ENCODE measurements at regions of chr3 and their contacts with region 1.

Region 1: DNA sequence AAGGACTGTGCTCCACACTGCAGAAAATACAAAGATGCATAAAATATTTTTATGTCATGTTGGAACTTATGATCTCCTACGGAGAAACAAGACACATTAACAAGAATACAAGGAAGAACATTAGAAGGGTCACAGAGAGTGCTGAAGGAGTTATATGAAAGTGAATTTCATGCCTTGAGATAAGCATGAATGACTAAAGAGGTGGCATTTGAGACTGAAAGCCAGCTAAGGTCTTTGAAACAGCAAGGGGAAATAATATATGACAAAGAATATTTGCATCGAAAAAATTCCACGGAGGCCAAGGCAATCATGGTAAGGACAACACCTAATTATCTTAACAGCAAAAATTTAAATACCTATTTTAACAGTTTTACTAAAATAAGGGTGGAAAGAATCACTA is 12.5 kb downstream of the GSK3B start:
- DNase-seq: no peak
- ATAC-seq: no peak
- H3K4me3 ChIP-seq: no peak overlapping the region
- H3K27ac ChIP-seq: no peak overlapping the region
- H3K4me1 ChIP-seq: peaks cover 0 to 68% (median 46%) of the 10 kb centered on the region in 12 donors
- H3K27me3 ChIP-seq: no peaks in the 10 kb centered on the region
- CTCF ChIP-seq: no peak
- POLR2A ChIP-seq: no peak

Region 2: GRCh38 chr3:120013481-120013880 is 68.2 kb before region 1 on chr3:
- intact Hi-C with region 1: loop called in 1 of 10 experiments (anchors 10 kb)
- DNase-seq: no peak
- ATAC-seq: peak in 3 of 4 donors; percentile 45 to 69 (median 46)
- H3K4me3 ChIP-seq: no peak overlapping the region
- H3K27ac ChIP-seq: peak overlapping the region in 8 of 12 donors; percentile 3 to 45 (median 24)
- H3K4me1 ChIP-seq: peaks cover 3 to 79% (median 58%) of the 10 kb centered on the region in 12 donors
- H3K27me3 ChIP-seq: no peaks in the 10 kb centered on the region
- CTCF ChIP-seq: no peak
- POLR2A ChIP-seq: no peak

Measured in heart left ventricle (tissue), 16 donors.